Mammary epithelial cell (primary cell): ENCODE measurements at regions of chr3 and their contacts with region 1.

Region 1: GRCh38 chr3:98980915-98981596 is 79.6 kb upstream of the DCBLD2 start:
- DNase-seq: peak; percentile 93
- H3K4me3 ChIP-seq: peak overlapping the region; percentile 34 to 83 (median 73)
- H3K27ac ChIP-seq: peak overlapping the region; percentile 81
- H3K4me1 ChIP-seq: peaks cover 45% of the 10 kb centered on the region
- H3K27me3 ChIP-seq: no peaks in the 10 kb centered on the region
- CTCF ChIP-seq: no peak

Region 2: DNA sequence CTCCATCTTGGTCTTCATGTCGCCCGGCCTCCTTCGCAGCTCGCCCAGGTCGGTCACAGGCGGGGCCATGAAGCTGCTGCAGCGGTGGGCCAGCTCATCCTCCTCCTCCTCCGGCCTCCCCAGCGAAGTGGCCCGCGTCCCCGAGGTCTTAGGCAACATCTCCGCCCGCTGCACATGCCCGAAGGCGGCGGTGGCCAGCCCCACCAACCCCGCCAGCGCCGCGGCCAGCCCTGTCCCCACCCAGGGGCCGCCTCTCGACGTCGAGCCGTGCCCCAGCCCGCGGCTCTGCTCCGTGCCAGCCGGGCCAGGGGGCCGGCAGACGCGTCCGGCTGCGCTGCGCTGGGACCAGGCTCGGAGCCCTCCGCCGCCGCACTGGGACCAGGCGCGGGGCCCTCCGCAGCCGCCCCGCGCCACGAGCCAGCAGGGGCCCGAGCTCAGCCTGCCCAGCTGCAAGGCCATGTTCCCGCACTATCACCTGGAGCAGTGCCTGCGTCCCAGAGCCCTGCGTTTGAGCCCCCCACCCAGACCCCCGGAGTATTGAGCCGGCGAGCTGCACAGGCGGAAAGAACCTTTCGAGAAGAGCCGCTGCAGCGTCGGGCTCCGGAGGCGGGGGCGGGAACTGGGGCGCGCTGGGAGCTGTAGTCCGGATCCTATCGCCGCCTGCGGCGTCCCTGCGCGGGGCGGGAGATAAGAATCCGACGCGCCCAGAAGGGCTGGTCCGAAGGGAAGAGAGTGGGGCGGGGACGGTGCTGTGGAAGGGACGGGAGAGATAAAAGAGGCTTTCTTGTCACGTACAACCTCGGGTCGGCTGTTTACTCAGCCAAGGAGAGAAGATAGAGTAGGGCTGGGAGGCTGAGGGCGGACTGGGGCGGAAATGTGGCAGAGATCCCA is 387.8 kb before region 1 on chr3 and contains the start of gene CPOX:
- CTCF ChIA-PET with region 1: no interaction called
- dilution Hi-C with region 1: no loop called
- in situ Hi-C with region 1: no loop called
- intact Hi-C with region 1: no loop called
- DNase-seq: peak; percentile 93
- H3K4me3 ChIP-seq: peak within 1 kb of the TSS; percentile 62 to 94 (median 92)
- H3K27ac ChIP-seq: peak within 1 kb of the TSS; percentile 58
- H3K4me1 ChIP-seq: peaks cover 7% of the 10 kb centered on the region
- H3K27me3 ChIP-seq: no peaks in the 10 kb centered on the region
- CTCF ChIP-seq: no peak
- total RNA-seq, gene CPOX: 24.3 to 25.2 TPM

Region 3: DNA sequence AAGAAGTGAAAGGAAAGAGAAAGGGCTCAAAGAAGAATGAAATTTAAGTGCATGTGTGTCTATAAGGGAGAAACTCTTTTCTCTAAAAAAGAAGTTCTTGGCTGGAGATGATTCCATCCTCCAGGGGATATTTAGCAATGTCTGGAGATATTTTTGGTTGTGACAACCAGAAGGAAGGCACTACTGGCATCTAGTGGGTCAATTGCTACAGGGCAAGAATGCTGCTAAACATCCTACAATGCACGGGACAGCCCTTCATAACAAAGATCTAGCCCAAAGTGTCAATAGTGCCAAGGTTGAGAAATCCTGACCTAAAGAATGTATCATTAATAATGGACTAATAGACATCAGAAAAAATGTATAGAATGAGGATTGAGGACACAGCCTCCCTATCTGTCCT is 275.4 kb before region 1 on chr3:
- CTCF ChIA-PET with region 1: no interaction called
- dilution Hi-C with region 1: no loop called
- in situ Hi-C with region 1: no loop called
- intact Hi-C with region 1: no loop called
- DNase-seq: no peak
- H3K4me3 ChIP-seq: no peak overlapping the region
- H3K27ac ChIP-seq: no peak overlapping the region
- H3K4me1 ChIP-seq: no peaks in the 10 kb centered on the region
- H3K27me3 ChIP-seq: no peaks in the 10 kb centered on the region
- CTCF ChIP-seq: peak; percentile 28 to 59

Region 4: DNA sequence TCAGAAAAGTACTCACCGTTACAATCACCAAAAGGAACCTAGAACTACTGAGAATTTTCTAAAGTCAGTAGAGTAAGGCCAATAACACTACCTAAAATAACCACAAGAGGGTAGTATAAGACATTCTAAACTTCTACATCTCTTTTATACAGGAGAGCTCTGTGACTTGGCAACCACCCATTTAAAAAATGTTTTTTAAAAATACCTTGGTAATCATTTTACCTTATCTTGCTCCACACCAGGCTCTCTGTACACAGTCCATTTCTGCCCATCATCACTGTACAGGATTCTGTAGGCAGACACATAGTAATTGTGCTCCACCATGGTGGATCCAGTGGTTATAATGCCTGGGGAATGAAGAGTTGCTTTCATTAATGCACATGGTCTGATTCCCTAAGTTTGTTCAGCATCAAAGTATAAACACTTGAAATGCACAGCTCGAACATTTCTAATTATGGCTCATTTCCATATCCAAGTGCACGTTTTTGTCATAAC is 163.5 kb before region 1 on chr3:
- CTCF ChIA-PET with region 1: interaction called, 8 read pairs
- dilution Hi-C with region 1: no loop called
- in situ Hi-C with region 1: loop called in 1 of 2 experiments (anchors 10 kb)
- intact Hi-C with region 1: loop called (anchors 1 kb)
- DNase-seq: no peak
- H3K4me3 ChIP-seq: no peak overlapping the region
- H3K27ac ChIP-seq: no peak overlapping the region
- H3K4me1 ChIP-seq: peaks cover 3% of the 10 kb centered on the region
- H3K27me3 ChIP-seq: no peaks in the 10 kb centered on the region
- CTCF ChIP-seq: peak; percentile 57 to 69

Region 5: GRCh38 chr3:98893740-98894139 is 87.3 kb before region 1 on chr3:
- CTCF ChIA-PET with region 1: no interaction called
- dilution Hi-C with region 1: loop called (anchors 10 kb)
- in situ Hi-C with region 1: no loop called
- intact Hi-C with region 1: no loop called
- DNase-seq: no peak
- H3K4me3 ChIP-seq: peak overlapping the region in 1 of 3 experiments; percentile 10
- H3K27ac ChIP-seq: no peak overlapping the region
- H3K4me1 ChIP-seq: peaks cover 66% of the 10 kb centered on the region
- H3K27me3 ChIP-seq: no peaks in the 10 kb centered on the region
- CTCF ChIP-seq: no peak